ENCODE measurements at regions of chr2 and their contacts with region 1.

Region 1: DNA sequence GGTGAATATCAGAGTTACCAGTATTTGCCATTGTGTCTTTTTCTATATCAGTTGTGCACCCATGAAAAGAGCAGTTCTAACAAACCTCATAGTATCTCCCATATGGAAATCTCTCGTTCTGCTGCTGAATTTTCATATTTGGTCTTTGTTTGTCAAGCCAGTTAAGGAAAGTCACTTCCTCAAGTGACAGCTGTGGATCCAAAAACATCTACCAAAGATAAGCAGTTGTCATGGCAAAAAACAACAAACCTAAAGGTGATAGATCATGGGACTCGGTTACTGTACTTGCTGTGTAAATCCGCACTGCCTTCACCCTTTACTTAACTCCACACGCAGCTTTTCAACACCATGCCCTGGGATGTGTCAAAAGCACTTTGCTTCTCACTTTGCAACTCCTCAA is 17.3 kb downstream of the BMP10 start:
- DNase-seq: no peak
- ATAC-seq: peak in 1 of 2 donors; percentile 66

Region 2: DNA sequence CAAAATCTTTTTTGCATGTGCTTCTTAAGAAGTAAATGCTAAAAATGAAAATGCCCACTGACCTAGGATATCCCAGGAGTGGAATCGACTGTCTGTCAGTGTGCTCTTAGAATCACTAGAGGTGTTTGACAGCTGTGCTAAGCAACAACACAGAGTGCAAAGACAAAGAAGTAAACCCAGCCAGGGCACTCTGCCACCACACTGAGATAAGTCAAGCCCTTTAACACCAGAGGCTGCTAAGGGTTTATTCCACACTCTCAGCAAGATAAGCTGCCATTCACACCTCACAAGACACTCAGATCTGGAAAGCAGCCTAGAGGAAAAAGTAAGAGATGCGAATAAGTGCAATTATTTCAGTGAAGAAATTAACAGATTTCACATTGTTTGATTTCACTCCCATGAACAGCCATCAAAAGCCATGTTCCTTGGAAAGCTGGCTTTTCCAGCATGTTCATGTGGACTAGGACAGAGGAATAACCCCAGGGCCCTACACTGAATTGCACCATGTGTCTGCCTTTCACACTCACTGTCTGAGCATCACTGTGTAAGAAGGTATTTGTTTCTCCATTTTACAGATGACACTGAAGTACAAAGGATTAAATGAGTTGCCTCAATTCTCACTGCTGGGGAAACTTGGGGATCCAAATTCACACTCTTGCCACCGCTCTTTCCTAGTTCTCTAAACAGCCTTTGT is 23.3 kb after region 1 on chr2:
- intact Hi-C with region 1: loop called in 1 of 2 experiments (anchors 2 kb)
- DNase-seq: peak; percentile 69
- ATAC-seq: peak; percentile 99

Region 3: DNA sequence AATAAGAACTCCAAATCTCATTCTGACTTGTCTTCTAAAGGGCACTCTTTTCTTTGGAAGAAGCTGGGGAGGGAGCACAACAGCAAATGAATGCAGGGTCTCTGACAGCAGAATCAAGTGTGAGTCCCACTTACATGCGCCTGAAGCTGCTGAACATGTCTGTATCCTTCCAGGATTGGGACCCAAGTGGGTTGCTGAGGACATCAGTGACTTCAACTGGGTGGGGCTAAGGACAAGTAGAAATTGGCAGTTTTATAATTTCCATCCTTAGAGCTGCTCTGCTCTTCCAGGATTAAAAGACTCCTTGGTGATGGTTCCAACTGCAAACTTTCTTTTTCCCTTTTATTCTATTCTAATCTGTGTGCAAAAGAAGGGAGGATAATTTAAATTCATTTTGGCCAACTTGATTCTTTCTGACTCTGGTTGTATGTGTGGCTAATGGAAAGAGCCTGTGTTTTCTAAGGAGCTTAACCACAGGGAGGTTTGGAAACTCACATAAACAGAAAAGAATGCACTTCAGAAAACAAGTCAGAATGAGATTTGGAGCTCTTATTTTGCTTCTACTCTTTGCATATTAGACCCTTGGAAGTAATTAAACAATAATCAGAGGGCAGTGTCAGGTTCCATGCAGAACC is 179.7 kb after region 1 on chr2:
- intact Hi-C with region 1: no loop called
- DNase-seq: no peak
- ATAC-seq: peak; percentile 38 to 61

Measured in left cardiac atrium (tissue), 4 donors.